Colonic mucosa (tissue), 4 donors: ENCODE measurements at regions of chr2 and their contacts with region 1.

Region 1: DNA sequence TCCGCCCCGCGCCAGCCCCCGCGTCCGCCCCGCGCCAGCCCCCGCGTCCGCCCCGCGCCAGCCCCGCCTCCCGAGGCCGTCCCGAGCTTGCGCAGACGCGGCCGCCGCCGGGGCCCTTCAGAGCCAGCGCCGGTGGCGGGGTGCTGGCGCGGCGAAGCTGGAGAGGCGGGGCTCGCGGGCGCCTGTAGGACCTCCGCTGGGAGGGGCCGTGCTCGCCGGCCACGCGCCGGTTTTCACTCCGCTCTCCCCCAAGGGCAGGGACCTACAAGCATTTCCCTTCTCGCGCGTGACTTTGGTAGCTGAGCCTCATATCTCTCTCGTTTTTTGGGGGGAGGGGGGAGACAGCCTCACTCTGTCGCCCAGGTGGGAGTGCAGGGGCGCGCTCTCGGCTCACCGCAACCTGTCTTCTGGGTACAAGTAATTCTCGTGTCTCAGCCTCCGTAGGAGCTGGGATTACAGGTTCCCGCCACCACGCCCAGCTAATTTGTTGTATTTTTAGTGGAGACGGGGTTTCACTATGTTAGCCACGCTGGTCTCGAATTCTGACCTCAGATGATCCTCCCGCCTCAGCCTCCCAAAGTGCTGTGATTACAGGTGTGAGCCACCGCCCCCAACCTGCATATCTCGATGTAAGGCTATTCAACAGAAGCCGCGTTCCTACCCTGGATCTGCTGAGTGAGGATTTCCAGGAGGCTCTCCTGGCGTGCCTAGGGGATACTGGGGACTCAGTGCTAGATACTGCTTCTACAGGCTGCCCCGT is at the start of gene ZNF514:
- DNase-seq: peak; percentile 78
- H3K4me3 ChIP-seq: peak within 1 kb of the TSS; percentile 84
- H3K27ac ChIP-seq: peak within 1 kb of the TSS; percentile 61
- H3K4me1 ChIP-seq: peaks cover 14% of the 10 kb centered on the region
- H3K27me3 ChIP-seq: no peaks in the 10 kb centered on the region
- CTCF ChIP-seq: no peak
- total RNA-seq, gene ZNF514: 12.8 to 15.6 TPM

Region 2: DNA sequence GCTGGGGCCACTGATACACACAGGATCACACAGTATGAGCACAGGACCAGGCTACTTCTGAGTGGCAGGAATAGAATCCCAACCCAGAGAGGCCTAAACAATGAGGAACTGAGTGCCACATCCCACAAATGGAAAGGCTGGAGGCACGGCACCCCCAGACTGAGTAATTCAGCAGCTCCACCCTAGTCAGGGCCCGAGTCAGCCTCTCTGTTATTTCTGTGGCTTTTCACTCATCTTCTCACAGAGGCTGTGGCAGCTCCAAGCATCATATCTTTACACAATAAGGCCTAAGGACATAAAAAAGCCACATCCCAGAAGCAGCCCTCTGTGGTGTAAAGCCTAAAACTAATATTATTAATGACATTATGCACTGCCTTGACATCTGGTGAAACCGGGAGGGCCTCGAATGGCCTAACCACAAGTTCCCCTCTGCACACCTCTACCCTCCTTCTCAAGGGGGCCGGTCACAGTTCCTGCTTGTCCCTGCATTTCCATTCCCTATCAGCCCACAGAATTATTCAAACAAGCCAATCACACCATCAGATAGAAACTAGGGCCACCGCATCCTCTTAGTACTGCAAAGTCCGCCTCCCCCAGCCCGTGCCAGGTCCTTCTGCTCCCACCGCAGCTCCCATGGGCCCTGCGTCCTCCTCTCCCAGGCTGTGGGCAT is 146.9 kb before region 1 on chr2:
- intact Hi-C with region 1: no loop called
- DNase-seq: no peak
- H3K4me3 ChIP-seq: no peak overlapping the region
- H3K27ac ChIP-seq: no peak overlapping the region
- H3K4me1 ChIP-seq: no peaks in the 10 kb centered on the region
- H3K27me3 ChIP-seq: no peaks in the 10 kb centered on the region
- CTCF ChIP-seq: no peak

Region 3: GRCh38 chr2:95121407-95122196 is 38.3 kb before region 1 on chr2 and contains the start of gene MRPS5:
- intact Hi-C with region 1: loop called (anchors 5 kb)
- DNase-seq: peak; percentile 91
- H3K4me3 ChIP-seq: peak within 1 kb of the TSS; percentile 100
- H3K27ac ChIP-seq: peak within 1 kb of the TSS; percentile 95
- H3K4me1 ChIP-seq: peaks cover 11% of the 10 kb centered on the region
- H3K27me3 ChIP-seq: no peaks in the 10 kb centered on the region
- CTCF ChIP-seq: no peak
- total RNA-seq, gene MRPS5: 68.8 to 87.3 TPM

Region 4: GRCh38 chr2:95289253-95289652 is 129.4 kb after region 1 on chr2:
- intact Hi-C with region 1: no loop called
- DNase-seq: no peak
- H3K4me3 ChIP-seq: no peak overlapping the region
- H3K27ac ChIP-seq: no peak overlapping the region
- H3K4me1 ChIP-seq: no peaks in the 10 kb centered on the region
- H3K27me3 ChIP-seq: no peaks in the 10 kb centered on the region
- CTCF ChIP-seq: no peak